ENCODE measurements at regions of chr1 and their contacts with region 1.

Region 1: DNA sequence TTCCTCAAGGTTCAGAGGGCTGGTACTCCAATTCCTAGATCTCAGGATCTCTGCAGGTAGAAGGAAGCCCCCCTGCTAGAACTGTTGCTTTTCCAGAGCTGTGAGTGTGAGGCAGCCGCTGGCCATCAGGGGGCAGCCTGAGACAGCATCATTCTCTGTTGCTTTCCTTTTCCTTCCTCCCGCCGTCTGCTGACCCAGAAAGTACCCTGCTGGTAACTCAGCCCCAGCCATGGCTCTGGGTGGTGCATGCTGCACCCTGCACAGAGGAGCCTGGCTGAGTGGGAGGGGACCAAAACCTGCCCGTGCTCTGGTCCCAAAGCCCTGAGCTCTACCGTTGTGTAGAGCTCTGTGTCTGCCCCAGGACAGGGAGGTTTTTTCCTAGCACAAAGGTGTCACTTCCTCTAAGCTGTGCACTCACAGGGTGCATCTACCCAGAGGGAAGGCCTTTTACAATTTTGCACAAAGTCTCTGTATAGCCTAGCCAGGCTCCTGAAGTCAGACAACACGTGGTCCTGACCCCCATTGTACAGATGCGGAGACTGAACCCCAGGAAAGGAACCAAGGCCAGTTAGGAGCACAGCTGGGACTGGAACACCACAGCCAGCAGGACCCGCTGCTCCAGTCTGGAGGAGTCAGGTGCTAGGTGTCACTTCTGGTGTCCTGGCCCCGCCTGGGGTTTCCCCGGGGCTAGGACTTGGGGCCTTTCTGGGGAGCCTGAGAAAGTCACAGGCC is 5.6 kb upstream of the FAM131C start:
- DNase-seq: no peak
- ATAC-seq: peak; percentile 58
- H3K4me3 ChIP-seq: no peak overlapping the region
- H3K27ac ChIP-seq: peak overlapping the region; percentile 31; the same call in 1 of the 2 replicates
- H3K4me1 ChIP-seq: peaks cover 30 to 66% of the 10 kb centered on the region in 2 experiments
- H3K27me3 ChIP-seq: no peaks in the 10 kb centered on the region
- CTCF ChIP-seq: peak in 2 of 3 experiments; percentile 93 to 94; a peak in 4 of 6 replicates
- POLR2A ChIP-seq: no peak
- RAD21 ChIP-seq: no peak

Region 2: GRCh38 chr1:16055613-16056520 is 23.2 kb before region 1 on chr1:
- CTCF ChIA-PET with region 1: no interaction called
- POLR2A ChIA-PET with region 1: no interaction called
- RAD21 ChIA-PET with region 1: no interaction called
- intact Hi-C with region 1: no loop called
- DNase-seq: peak; percentile 87
- ATAC-seq: peak; percentile 95
- H3K4me3 ChIP-seq: no peak overlapping the region
- H3K27ac ChIP-seq: no peak overlapping the region
- H3K4me1 ChIP-seq: peaks cover 4 to 9% of the 10 kb centered on the region in 2 experiments; a peak in 3 of 4 replicates
- H3K27me3 ChIP-seq: no peaks in the 10 kb centered on the region
- CTCF ChIP-seq: peak; percentile 86 to 96 (median 88)
- POLR2A ChIP-seq: no peak
- RAD21 ChIP-seq: peak; percentile 97

Region 3: DNA sequence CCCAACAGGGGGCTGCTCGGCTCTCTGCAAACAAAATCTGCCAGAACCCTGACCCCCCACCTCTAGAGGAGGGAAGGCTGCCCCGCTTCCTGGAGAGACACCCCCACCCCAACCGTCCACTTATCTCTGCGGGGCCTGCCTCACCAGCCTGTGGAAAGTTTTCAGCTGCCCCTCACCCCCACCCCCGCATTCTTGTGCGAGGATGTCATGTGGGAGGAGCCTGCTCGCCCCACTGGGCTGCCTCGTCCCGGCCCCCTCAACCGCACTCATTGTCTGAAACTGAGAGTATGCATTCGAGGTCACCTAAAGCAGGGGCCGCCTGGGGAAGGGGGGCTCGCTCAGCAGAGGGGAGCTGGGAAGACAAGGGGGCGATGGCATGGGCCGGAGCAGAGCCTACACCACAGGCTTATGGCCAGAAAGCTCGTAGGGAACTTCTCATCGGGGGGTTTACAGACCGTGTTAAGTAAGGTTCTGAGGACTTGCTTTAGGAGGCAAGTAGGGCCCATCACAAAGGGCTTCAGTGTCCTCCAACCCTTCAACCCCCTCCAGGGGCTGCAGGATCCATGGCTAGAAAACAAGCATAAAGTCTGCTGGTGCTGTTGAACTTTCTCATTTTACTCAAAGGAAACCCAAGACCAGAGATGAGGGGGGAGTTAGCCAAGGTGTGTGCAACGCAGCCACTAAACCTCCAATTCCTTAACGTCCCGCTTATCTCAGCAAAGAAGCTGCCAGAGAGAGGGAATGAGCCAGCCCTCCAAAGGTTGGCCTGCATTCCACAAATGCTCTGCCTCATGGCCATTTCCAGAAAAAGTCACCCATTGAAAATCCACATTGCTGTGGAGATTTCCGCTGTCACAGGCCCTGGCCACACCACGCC is 67.4 kb after region 1 on chr1:
- CTCF ChIA-PET with region 1: interaction called, 6 read pairs
- POLR2A ChIA-PET with region 1: interaction called, 7 read pairs
- RAD21 ChIA-PET with region 1: interaction called, 3 read pairs
- intact Hi-C with region 1: loop called (anchors 2 kb)
- DNase-seq: no peak
- ATAC-seq: peak; percentile 28
- H3K4me3 ChIP-seq: peak overlapping the region; percentile 31 to 53
- H3K27ac ChIP-seq: peak overlapping the region; percentile 100
- H3K4me1 ChIP-seq: peaks cover 87 to 100% of the 10 kb centered on the region in 2 experiments
- H3K27me3 ChIP-seq: no peaks in the 10 kb centered on the region
- CTCF ChIP-seq: no peak
- POLR2A ChIP-seq: no peak
- RAD21 ChIP-seq: no peak

Region 4: GRCh38 chr1:16181887-16182719 is 103.0 kb after region 1 on chr1:
- CTCF ChIA-PET with region 1: interaction called, 222 read pairs
- POLR2A ChIA-PET with region 1: interaction called, 31 read pairs
- RAD21 ChIA-PET with region 1: interaction called, 9 to 26 read pairs
- intact Hi-C with region 1: loop called (anchors 1 kb)
- DNase-seq: peak; percentile 77
- ATAC-seq: peak; percentile 87
- H3K4me3 ChIP-seq: peak overlapping the region; percentile 19 to 49
- H3K27ac ChIP-seq: peak overlapping the region; percentile 94
- H3K4me1 ChIP-seq: peaks cover 74 to 89% of the 10 kb centered on the region in 2 experiments
- H3K27me3 ChIP-seq: no peaks in the 10 kb centered on the region
- CTCF ChIP-seq: no peak
- POLR2A ChIP-seq: no peak
- RAD21 ChIP-seq: no peak

Region 5: GRCh38 chr1:16217061-16217785 is 138.1 kb after region 1 on chr1:
- CTCF ChIA-PET with region 1: interaction called, 12 read pairs
- POLR2A ChIA-PET with region 1: no interaction called
- RAD21 ChIA-PET with region 1: interaction called, 3 to 10 read pairs
- intact Hi-C with region 1: no loop called
- DNase-seq: peak; percentile 96
- ATAC-seq: peak; percentile 93
- H3K4me3 ChIP-seq: peak overlapping the region; percentile 56 to 62
- H3K27ac ChIP-seq: peak overlapping the region; percentile 5; the same call in 1 of the 2 replicates
- H3K4me1 ChIP-seq: peaks cover 26 to 47% of the 10 kb centered on the region in 2 experiments
- H3K27me3 ChIP-seq: no peaks in the 10 kb centered on the region
- CTCF ChIP-seq: no peak
- POLR2A ChIP-seq: no peak
- RAD21 ChIP-seq: no peak

Region 6: GRCh38 chr1:16366722-16367257 is 287.7 kb after region 1 on chr1 and contains the start of gene SZRD1:
- CTCF ChIA-PET with region 1: interaction called, 24 read pairs
- POLR2A ChIA-PET with region 1: no interaction called
- RAD21 ChIA-PET with region 1: interaction called, 3 to 4 read pairs
- intact Hi-C with region 1: loop called (anchors 1 kb)
- DNase-seq: peak; percentile 98
- ATAC-seq: peak; percentile 88
- H3K4me3 ChIP-seq: peak within 1 kb of the TSS; percentile 61 to 96
- H3K27ac ChIP-seq: peak within 1 kb of the TSS; percentile 92
- H3K4me1 ChIP-seq: peaks cover 4 to 35% of the 10 kb centered on the region in 2 experiments; a peak in 3 of 4 replicates
- H3K27me3 ChIP-seq: no peaks in the 10 kb centered on the region
- CTCF ChIP-seq: no peak
- POLR2A ChIP-seq: no peak
- RAD21 ChIP-seq: no peak
- total RNA-seq, gene SZRD1: 141 TPM

Region 7: GRCh38 chr1:16383917-16384316 is 304.8 kb after region 1 on chr1:
- CTCF ChIA-PET with region 1: no interaction called
- POLR2A ChIA-PET with region 1: no interaction called
- RAD21 ChIA-PET with region 1: no interaction called
- intact Hi-C with region 1: no loop called
- DNase-seq: no peak
- ATAC-seq: no peak
- H3K4me3 ChIP-seq: no peak overlapping the region
- H3K27ac ChIP-seq: no peak overlapping the region
- H3K4me1 ChIP-seq: peaks cover 31 to 60% of the 10 kb centered on the region in 2 experiments
- H3K27me3 ChIP-seq: no peaks in the 10 kb centered on the region
- CTCF ChIP-seq: no peak
- POLR2A ChIP-seq: no peak
- RAD21 ChIP-seq: no peak